ENCODE measurements at regions of chr9 and their contacts with region 1.

Region 1: GRCh38 chr9:126490871-126491567 is 122.7 kb upstream of the LMX1B start:
- DNase-seq: peak in 7 of 9 experiments; percentile 41 to 82 (median 68)
- ATAC-seq: peak; percentile 74
- H3K4me3 ChIP-seq: no peak overlapping the region
- H3K4me3 Mint-ChIP-seq: no peak overlapping the region
- H3K27ac ChIP-seq: no peak overlapping the region
- H3K27ac Mint-ChIP-seq: no peak overlapping the region
- H3K4me1 ChIP-seq: peaks cover 16% of the 10 kb centered on the region
- H3K4me1 Mint-ChIP-seq: peaks cover 16% of the 10 kb centered on the region
- H3K27me3 ChIP-seq: no peaks in the 10 kb centered on the region
- H3K27me3 Mint-ChIP-seq: no peaks in the 10 kb centered on the region
- CTCF ChIP-seq: peak; percentile 88

Region 2: GRCh38 chr9:125558453-125559092 is 932.4 kb before region 1 on chr9:
- CTCF ChIA-PET with region 1: interaction called, 4 read pairs
- POLR2A ChIA-PET with region 1: interaction called, 3 read pairs
- intact Hi-C with region 1: loop called in 1 of 2 experiments (anchors 2 kb)
- DNase-seq: peak; percentile 13 to 73 (median 45)
- ATAC-seq: peak; percentile 74
- H3K4me3 ChIP-seq: no peak overlapping the region
- H3K4me3 Mint-ChIP-seq: no peak overlapping the region
- H3K27ac ChIP-seq: no peak overlapping the region
- H3K27ac Mint-ChIP-seq: no peak overlapping the region
- H3K4me1 ChIP-seq: no peaks in the 10 kb centered on the region
- H3K4me1 Mint-ChIP-seq: peaks cover 11% of the 10 kb centered on the region
- H3K27me3 ChIP-seq: no peaks in the 10 kb centered on the region
- H3K27me3 Mint-ChIP-seq: no peaks in the 10 kb centered on the region
- CTCF ChIP-seq: peak; percentile 76

Region 3: DNA sequence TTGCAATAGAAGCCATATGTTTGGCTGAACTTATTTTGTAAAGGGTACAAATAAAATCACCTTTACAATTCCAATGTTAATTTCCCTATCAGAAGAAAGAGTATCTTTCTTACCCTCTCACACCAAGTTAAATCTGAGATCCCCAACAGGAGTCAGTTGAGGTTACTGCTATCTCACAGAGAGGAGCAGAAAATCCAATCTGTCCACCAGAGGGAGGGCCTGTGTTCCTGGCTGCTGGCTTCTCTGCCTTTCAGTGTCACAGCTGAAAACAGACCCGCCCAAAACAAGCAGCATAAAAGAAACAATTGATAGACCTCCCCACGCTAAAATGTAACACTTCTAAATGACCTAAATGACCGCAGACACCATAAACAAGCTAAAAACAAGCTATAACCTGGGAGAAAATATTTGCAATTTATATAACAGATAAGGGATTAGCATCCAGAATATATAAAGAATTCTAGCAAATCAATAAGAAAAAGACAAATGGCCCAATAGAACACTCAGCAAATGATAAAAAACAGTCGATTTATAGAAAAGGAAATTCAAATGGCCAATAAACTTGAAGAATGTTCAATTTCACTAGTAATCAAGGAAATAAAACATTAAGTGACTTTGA is 188.9 kb before region 1 on chr9:
- CTCF ChIA-PET with region 1: interaction called, 62 read pairs
- POLR2A ChIA-PET with region 1: no interaction called
- intact Hi-C with region 1: loop called (anchors 1 kb)
- DNase-seq: peak; percentile 22 to 79 (median 59)
- ATAC-seq: peak; percentile 87
- H3K4me3 ChIP-seq: no peak overlapping the region
- H3K4me3 Mint-ChIP-seq: no peak overlapping the region
- H3K27ac ChIP-seq: no peak overlapping the region
- H3K27ac Mint-ChIP-seq: no peak overlapping the region
- H3K4me1 ChIP-seq: no peaks in the 10 kb centered on the region
- H3K4me1 Mint-ChIP-seq: peaks cover 3% of the 10 kb centered on the region
- H3K27me3 ChIP-seq: no peaks in the 10 kb centered on the region
- H3K27me3 Mint-ChIP-seq: peaks cover 4% of the 10 kb centered on the region
- CTCF ChIP-seq: peak; percentile 71

Region 4: DNA sequence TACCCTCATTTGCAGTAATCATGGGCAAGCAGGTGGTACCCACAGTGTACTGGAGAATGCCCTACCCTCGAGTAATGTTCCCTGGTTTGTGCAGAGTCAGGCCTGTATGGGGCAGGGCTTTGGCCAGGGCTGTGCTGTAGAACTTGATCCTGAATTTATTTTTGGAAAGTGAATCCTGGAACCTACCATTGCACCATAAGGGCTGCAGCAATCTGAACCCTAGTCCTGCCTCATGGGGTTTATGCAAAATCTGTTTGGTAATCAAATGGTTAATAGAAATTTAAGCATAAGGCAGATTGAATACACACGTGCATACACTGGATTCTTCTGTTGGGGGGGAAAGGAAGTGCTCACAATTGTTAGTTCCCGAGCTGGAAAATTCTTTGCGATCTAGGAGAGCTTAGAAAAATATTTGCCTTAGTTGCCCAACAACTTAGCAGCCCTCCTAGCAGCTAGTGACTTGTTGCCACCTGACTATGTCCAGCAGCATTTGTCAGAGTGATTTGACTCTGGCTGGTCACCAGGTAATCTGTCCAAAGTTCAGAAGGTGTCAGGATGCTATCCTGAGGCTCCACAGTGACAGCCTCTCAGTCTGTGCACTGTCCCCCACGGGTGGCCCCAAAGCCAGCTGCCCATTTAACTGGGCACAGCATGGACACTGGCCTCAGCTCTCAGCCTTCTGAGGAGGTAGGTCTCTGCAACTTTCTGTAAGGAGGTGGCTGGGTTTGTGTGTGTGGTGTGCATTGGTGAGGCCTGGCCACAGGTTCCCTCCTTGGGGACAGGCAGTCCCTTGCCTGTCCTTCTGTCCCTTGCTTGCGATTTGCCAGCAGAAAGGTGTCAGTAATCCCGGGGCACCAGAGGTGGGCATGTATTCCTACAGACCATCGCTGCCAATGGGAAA is 156.0 kb before region 1 on chr9:
- CTCF ChIA-PET with region 1: interaction called, 31 read pairs
- POLR2A ChIA-PET with region 1: no interaction called
- intact Hi-C with region 1: no loop called
- DNase-seq: peak in 1 of 9 experiments; percentile 34
- ATAC-seq: no peak
- H3K4me3 ChIP-seq: no peak overlapping the region
- H3K4me3 Mint-ChIP-seq: no peak overlapping the region
- H3K27ac ChIP-seq: no peak overlapping the region
- H3K27ac Mint-ChIP-seq: no peak overlapping the region
- H3K4me1 ChIP-seq: peaks cover 23% of the 10 kb centered on the region
- H3K4me1 Mint-ChIP-seq: peaks cover 67% of the 10 kb centered on the region
- H3K27me3 ChIP-seq: no peaks in the 10 kb centered on the region
- H3K27me3 Mint-ChIP-seq: no peaks in the 10 kb centered on the region
- CTCF ChIP-seq: no peak

Region 5: DNA sequence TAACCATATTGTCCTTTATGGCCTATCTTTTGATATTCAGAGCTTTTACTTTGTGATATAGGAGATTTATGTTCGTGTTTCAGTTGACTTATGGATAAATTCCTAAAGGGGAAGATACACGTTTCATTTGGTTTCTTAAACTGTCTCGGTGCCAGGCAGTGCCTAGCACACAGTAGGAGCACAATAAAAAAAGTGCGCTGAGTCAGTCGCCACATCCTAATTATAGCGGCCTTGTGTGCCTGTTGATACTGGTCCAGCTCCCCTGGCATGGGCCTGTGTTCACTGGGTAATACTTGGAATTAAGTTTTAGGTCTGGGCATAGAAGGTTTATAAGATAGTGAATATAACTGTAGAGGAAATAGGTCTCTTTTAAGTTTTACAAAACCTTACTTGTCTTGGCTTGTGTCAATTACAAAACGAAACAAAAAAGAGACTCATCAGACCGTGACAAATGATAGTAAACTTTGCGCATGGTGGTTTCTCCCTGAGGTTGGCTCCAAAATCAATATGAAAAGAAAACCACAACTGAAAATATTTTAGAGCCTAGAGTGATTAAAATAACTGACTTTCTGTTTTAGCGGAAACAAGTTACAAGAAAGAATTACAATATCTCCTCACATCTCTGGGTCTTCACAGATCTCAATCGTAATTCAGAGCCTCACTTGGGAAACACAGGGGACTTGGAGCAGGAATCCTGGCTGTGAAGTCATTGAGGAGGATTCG is 79.6 kb before region 1 on chr9:
- CTCF ChIA-PET with region 1: interaction called, 11 read pairs
- POLR2A ChIA-PET with region 1: no interaction called
- intact Hi-C with region 1: no loop called
- DNase-seq: peak in 4 of 9 experiments; percentile 23 to 84 (median 70)
- ATAC-seq: peak; percentile 92
- H3K4me3 ChIP-seq: peak overlapping the region; percentile 25 to 40
- H3K4me3 Mint-ChIP-seq: peak overlapping the region; percentile 81
- H3K27ac ChIP-seq: peak overlapping the region; percentile 38 to 73
- H3K27ac Mint-ChIP-seq: peak overlapping the region; percentile 93
- H3K4me1 ChIP-seq: peaks cover 42% of the 10 kb centered on the region
- H3K4me1 Mint-ChIP-seq: peaks cover 43% of the 10 kb centered on the region
- H3K27me3 ChIP-seq: no peaks in the 10 kb centered on the region
- H3K27me3 Mint-ChIP-seq: no peaks in the 10 kb centered on the region
- CTCF ChIP-seq: no peak

Region 6: GRCh38 chr9:126456441-126457174 is 34.4 kb before region 1 on chr9:
- CTCF ChIA-PET with region 1: interaction called, 15 read pairs
- POLR2A ChIA-PET with region 1: no interaction called
- intact Hi-C with region 1: no loop called
- DNase-seq: no peak
- ATAC-seq: no peak
- H3K4me3 ChIP-seq: no peak overlapping the region
- H3K4me3 Mint-ChIP-seq: no peak overlapping the region
- H3K27ac ChIP-seq: no peak overlapping the region
- H3K27ac Mint-ChIP-seq: no peak overlapping the region
- H3K4me1 ChIP-seq: no peaks in the 10 kb centered on the region
- H3K4me1 Mint-ChIP-seq: peaks cover 20% of the 10 kb centered on the region
- H3K27me3 ChIP-seq: no peaks in the 10 kb centered on the region
- H3K27me3 Mint-ChIP-seq: no peaks in the 10 kb centered on the region
- CTCF ChIP-seq: no peak

Region 7: GRCh38 chr9:126532489-126532888 is 41.5 kb after region 1 on chr9:
- CTCF ChIA-PET with region 1: no interaction called
- POLR2A ChIA-PET with region 1: no interaction called
- intact Hi-C with region 1: no loop called
- DNase-seq: no peak
- ATAC-seq: no peak
- H3K4me3 ChIP-seq: no peak overlapping the region
- H3K4me3 Mint-ChIP-seq: no peak overlapping the region
- H3K27ac ChIP-seq: no peak overlapping the region
- H3K27ac Mint-ChIP-seq: no peak overlapping the region
- H3K4me1 ChIP-seq: no peaks in the 10 kb centered on the region
- H3K4me1 Mint-ChIP-seq: no peaks in the 10 kb centered on the region
- H3K27me3 ChIP-seq: no peaks in the 10 kb centered on the region
- H3K27me3 Mint-ChIP-seq: peaks cover 7% of the 10 kb centered on the region
- CTCF ChIP-seq: no peak

Region 8: GRCh38 chr9:126550891-126551351 is 59.9 kb after region 1 on chr9:
- CTCF ChIA-PET with region 1: interaction called, 187 read pairs
- POLR2A ChIA-PET with region 1: no interaction called
- intact Hi-C with region 1: no loop called
- DNase-seq: no peak
- ATAC-seq: no peak
- H3K4me3 ChIP-seq: no peak overlapping the region
- H3K4me3 Mint-ChIP-seq: no peak overlapping the region
- H3K27ac ChIP-seq: no peak overlapping the region
- H3K27ac Mint-ChIP-seq: no peak overlapping the region
- H3K4me1 ChIP-seq: no peaks in the 10 kb centered on the region
- H3K4me1 Mint-ChIP-seq: no peaks in the 10 kb centered on the region
- H3K27me3 ChIP-seq: no peaks in the 10 kb centered on the region
- H3K27me3 Mint-ChIP-seq: no peaks in the 10 kb centered on the region
- CTCF ChIP-seq: no peak

Region 9: GRCh38 chr9:126587187-126588185 is 96.5 kb after region 1 on chr9:
- CTCF ChIA-PET with region 1: no interaction called
- POLR2A ChIA-PET with region 1: no interaction called
- intact Hi-C with region 1: no loop called
- DNase-seq: no peak
- ATAC-seq: no peak
- H3K4me3 ChIP-seq: no peak overlapping the region
- H3K4me3 Mint-ChIP-seq: no peak overlapping the region
- H3K27ac ChIP-seq: no peak overlapping the region
- H3K27ac Mint-ChIP-seq: no peak overlapping the region
- H3K4me1 ChIP-seq: no peaks in the 10 kb centered on the region
- H3K4me1 Mint-ChIP-seq: no peaks in the 10 kb centered on the region
- H3K27me3 ChIP-seq: peaks cover 0 to 4% of the 10 kb centered on the region in 2 experiments
- H3K27me3 Mint-ChIP-seq: peaks cover 45% of the 10 kb centered on the region
- CTCF ChIP-seq: no peak